Transverse colon (tissue), 4 donors: ENCODE measurements at regions of chr2 and their contacts with region 1.

Region 1: DNA sequence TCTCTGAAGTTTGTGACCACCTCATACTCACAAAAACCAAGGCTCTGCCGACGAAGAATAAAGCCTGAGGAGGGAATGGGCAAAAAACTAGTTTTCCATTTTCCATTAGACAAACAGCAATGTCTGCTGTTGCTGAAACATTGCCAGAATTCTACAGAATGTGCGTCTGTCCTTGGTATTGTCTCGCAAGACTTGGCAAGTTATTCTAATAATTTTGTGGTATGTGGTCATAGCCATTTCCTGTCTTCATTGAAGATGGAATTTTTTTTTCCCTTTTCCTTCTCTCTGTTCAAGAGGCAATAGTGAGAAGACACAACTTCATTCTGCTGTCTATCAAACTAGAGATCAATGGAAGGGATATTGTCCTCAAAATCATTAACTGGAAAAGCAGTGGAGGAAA is 296.1 kb downstream of the RND3 start:
- DNase-seq: no peak
- H3K4me3 ChIP-seq: no peak overlapping the region
- H3K27ac ChIP-seq: no peak overlapping the region
- H3K4me1 ChIP-seq: peaks cover 0 to 6% (median 1%) of the 10 kb centered on the region in 4 donors
- H3K27me3 ChIP-seq: no peaks in the 10 kb centered on the region
- CTCF ChIP-seq: no peak
- EP300 ChIP-seq: no peak
- POLR2A ChIP-seq: no peak

Region 2: GRCh38 chr2:150109912-150110311 is 81.4 kb before region 1 on chr2:
- in situ Hi-C with region 1: no loop called
- intact Hi-C with region 1: no loop called
- DNase-seq: no peak
- H3K4me3 ChIP-seq: no peak overlapping the region
- H3K27ac ChIP-seq: no peak overlapping the region
- H3K4me1 ChIP-seq: no peaks in the 10 kb centered on the region
- H3K27me3 ChIP-seq: no peaks in the 10 kb centered on the region
- CTCF ChIP-seq: no peak
- EP300 ChIP-seq: no peak
- POLR2A ChIP-seq: no peak

Region 3: DNA sequence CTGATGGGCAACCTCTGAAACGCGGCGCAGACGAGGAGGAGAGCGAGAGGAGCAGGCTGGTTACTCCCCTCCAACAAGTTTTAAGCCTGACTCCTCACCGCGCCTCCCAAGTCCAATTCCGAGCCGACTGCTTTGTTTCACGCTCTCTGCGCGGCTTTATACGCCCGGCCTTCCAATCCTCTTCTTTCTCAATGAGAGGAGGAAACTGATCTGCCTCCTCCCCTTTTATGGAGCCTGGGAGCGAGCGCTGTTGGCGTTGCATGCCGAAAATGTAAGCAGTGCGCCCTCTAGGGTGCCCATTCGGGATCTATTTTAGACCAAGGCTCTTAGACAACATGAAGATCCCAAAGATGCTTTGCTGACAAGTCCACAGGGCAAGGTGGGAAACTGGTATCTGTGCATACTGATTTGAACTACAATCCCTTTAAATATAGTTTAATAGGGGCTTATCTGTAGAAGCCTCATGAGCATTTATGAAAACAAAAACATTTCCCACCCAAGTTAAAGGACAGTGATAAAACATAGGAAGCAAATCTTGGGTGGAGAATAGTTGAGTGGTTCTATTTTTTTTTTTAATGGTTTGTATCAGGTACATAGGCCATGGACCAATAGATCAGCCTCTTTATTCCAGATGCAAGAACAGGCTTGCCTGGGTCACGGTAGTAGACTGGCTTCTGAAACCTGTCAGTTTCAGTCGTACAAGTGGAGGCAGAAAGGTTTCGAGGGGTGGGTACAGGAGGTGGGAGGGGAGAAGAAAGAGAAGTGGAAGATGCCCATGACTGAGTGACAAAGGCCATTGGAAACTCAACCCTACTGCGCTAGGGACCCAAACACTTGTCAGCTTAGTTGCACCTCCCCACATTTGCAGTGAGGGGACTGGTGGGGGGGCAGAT is 296.4 kb after region 1 on chr2 and contains the start of gene RND3:
- in situ Hi-C with region 1: loop called in 2 of 4 experiments (anchors 25 kb)
- intact Hi-C with region 1: no loop called
- DNase-seq: peak; percentile 97
- H3K4me3 ChIP-seq: peak within 1 kb of the TSS; percentile 58 to 75 (median 69)
- H3K27ac ChIP-seq: peak within 1 kb of the TSS; percentile 93 to 96 (median 96)
- H3K4me1 ChIP-seq: peaks cover 6 to 24% (median 16%) of the 10 kb centered on the region in 4 donors
- H3K27me3 ChIP-seq: no peaks in the 10 kb centered on the region
- CTCF ChIP-seq: peak; percentile 74 to 93 (median 82)
- EP300 ChIP-seq: no peak
- POLR2A ChIP-seq: peak; percentile 98
- total RNA-seq, gene RND3: 16.5 to 54.6 (median 46.1) TPM

Region 4: DNA sequence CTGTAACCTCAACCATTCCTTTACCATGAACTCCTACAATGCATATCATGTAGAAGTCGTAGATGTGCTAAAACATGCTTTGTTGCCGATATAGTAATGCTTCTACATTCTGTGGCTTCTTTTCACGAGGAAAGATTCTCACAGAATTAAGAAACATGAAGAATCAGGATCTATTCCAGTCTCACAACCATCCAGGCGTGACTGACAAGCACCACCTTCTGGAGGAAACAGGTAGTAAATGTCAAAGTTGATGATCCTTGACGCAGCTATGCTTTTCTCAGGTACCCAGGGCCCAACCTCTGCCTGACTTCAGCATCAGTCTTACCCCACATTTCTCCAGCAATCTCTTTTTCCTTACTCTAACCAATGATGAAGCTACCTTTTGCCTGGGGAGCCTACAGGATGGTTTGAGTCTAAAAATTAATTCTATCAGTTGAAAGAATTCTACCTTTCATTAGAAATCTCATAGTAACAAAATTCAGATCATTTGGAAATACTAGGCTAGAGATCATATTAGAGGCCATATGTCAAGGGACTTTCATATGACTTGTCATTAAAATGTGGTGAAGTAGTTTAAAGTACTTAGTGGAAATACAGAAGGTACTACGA is 419.4 kb after region 1 on chr2:
- in situ Hi-C with region 1: loop called in 1 of 4 experiments (anchors 25 kb)
- intact Hi-C with region 1: no loop called
- DNase-seq: peak; percentile 16
- H3K4me3 ChIP-seq: no peak overlapping the region
- H3K27ac ChIP-seq: no peak overlapping the region
- H3K4me1 ChIP-seq: peaks cover 0 to 6% (median 2%) of the 10 kb centered on the region in 4 donors
- H3K27me3 ChIP-seq: no peaks in the 10 kb centered on the region
- CTCF ChIP-seq: peak; percentile 39 to 64 (median 49)
- EP300 ChIP-seq: no peak
- POLR2A ChIP-seq: no peak